Naive thymus-derived CD4-positive, alpha-beta T cell (primary cell): ENCODE measurements at regions of chr2 and their contacts with region 1.

Region 1: GRCh38 chr2:105576440-105577252 is 168.1 kb upstream of the NCK2 start:
- DNase-seq: peak in 7 of 9 donors; percentile 24 to 70 (median 50)
- ATAC-seq: peak; percentile 73
- H3K4me3 ChIP-seq: no peak overlapping the region
- H3K4me3 Mint-ChIP-seq: peak overlapping the region in 5 of 10 donors; percentile 1 to 41 (median 26)
- H3K27ac ChIP-seq: peak overlapping the region; percentile 39
- H3K27ac Mint-ChIP-seq: peak overlapping the region; percentile 74 to 95 (median 89)
- H3K4me1 ChIP-seq: peaks cover 3 to 16% of the 10 kb centered on the region in 2 donors
- H3K4me1 Mint-ChIP-seq: peaks cover 13 to 30% (median 20%) of the 10 kb centered on the region in 7 donors
- H3K27me3 ChIP-seq: no peaks in the 10 kb centered on the region
- H3K27me3 Mint-ChIP-seq: peaks cover 0 to 7% (median 0%) of the 10 kb centered on the region in 5 donors

Region 2: GRCh38 chr2:105744091-105744908 is 167.7 kb after region 1 on chr2:
- CTCF ChIA-PET with region 1: interaction called, 7 read pairs
- POLR2A ChIA-PET with region 1: interaction called, 5 read pairs
- intact Hi-C with region 1: loop called (anchors 2 kb)
- DNase-seq: peak; percentile 57 to 79 (median 69)
- ATAC-seq: peak; percentile 87
- H3K4me3 ChIP-seq: peak overlapping the region; percentile 24
- H3K4me3 Mint-ChIP-seq: peak overlapping the region; percentile 76 to 96 (median 90)
- H3K27ac ChIP-seq: peak overlapping the region; percentile 80
- H3K27ac Mint-ChIP-seq: peak overlapping the region; percentile 90 to 96 (median 95)
- H3K4me1 ChIP-seq: peaks cover 48 to 54% of the 10 kb centered on the region in 2 donors
- H3K4me1 Mint-ChIP-seq: peaks cover 49 to 82% (median 77%) of the 10 kb centered on the region in 7 donors
- H3K27me3 ChIP-seq: no peaks in the 10 kb centered on the region
- H3K27me3 Mint-ChIP-seq: no peaks in the 10 kb centered on the region

Region 3: DNA sequence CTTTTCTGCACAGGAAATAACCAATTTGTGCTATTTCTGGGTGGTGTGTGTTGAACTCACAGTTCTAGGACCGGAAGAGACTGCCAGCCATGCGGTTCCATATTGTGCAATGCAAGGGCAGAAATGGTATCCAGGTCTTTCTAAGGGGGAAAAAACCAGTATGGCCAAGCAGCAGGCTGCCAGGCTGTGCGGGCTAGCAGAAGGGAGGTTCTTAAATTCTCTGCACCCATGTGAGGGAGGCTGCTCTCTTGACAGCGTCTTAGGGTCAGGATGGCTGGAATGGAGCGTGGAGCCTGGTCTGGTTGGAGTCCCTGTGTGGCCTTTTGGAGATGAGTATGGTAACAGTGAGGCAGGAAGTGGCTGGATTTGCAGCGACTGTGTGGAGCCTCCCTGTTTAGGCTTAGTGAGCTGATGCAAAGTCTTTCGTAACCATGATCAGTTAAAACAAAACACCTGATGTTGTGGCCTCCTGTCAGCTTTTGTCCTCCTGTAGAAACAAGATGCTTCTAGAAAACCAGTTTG is 220.7 kb after region 1 on chr2:
- CTCF ChIA-PET with region 1: interaction called, 10 read pairs
- POLR2A ChIA-PET with region 1: interaction called, 5 read pairs
- intact Hi-C with region 1: loop called in 1 of 2 experiments (anchors 5 kb)
- DNase-seq: peak in 6 of 9 donors; percentile 37 to 58 (median 48)
- ATAC-seq: peak; percentile 33
- H3K4me3 ChIP-seq: peak overlapping the region; percentile 34
- H3K4me3 Mint-ChIP-seq: peak overlapping the region; percentile 70 to 92 (median 78)
- H3K27ac ChIP-seq: peak overlapping the region; percentile 74
- H3K27ac Mint-ChIP-seq: peak overlapping the region; percentile 92 to 100 (median 99)
- H3K4me1 ChIP-seq: peaks cover 92 to 93% of the 10 kb centered on the region in 2 donors
- H3K4me1 Mint-ChIP-seq: peaks cover 74 to 100% (median 94%) of the 10 kb centered on the region in 7 donors
- H3K27me3 ChIP-seq: no peaks in the 10 kb centered on the region
- H3K27me3 Mint-ChIP-seq: no peaks in the 10 kb centered on the region

Region 4: DNA sequence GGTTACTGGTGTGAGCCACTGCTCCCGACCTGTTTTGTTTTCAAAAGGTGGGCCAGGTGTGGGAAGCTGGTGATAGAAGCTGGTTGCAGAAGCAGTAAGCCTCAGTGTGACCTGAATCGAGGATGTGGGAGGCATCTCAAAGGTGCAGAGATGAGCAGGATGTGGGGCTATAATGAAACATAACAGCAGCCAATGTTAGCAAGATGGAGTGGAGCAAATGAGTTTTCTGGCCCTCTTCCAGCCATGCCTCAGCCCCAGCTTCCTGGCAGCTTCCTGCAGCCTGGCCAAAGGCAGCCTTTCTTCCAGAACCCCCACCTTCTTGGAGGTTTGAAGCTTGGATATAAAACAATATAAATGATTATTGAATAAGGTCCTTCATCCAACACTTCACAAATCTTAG is 352.9 kb after region 1 on chr2:
- CTCF ChIA-PET with region 1: interaction called, 3 read pairs
- POLR2A ChIA-PET with region 1: interaction called, 3 read pairs
- intact Hi-C with region 1: loop called in 1 of 2 experiments (anchors 5 kb)
- DNase-seq: peak in 8 of 9 donors; percentile 31 to 79 (median 70)
- ATAC-seq: peak; percentile 72
- H3K4me3 ChIP-seq: no peak overlapping the region
- H3K4me3 Mint-ChIP-seq: peak overlapping the region in 9 of 10 donors; percentile 51 to 85 (median 64)
- H3K27ac ChIP-seq: peak overlapping the region; percentile 55
- H3K27ac Mint-ChIP-seq: peak overlapping the region; percentile 63 to 97 (median 90)
- H3K4me1 ChIP-seq: peaks cover 61 to 83% of the 10 kb centered on the region in 2 donors
- H3K4me1 Mint-ChIP-seq: peaks cover 48 to 76% (median 71%) of the 10 kb centered on the region in 7 donors
- H3K27me3 ChIP-seq: no peaks in the 10 kb centered on the region
- H3K27me3 Mint-ChIP-seq: no peaks in the 10 kb centered on the region

Region 5: GRCh38 chr2:105977212-105977611 is 400.6 kb after region 1 on chr2:
- CTCF ChIA-PET with region 1: no interaction called
- POLR2A ChIA-PET with region 1: no interaction called
- intact Hi-C with region 1: loop called in 1 of 2 experiments (anchors 5 kb)
- DNase-seq: no peak
- ATAC-seq: no peak
- H3K4me3 ChIP-seq: no peak overlapping the region
- H3K4me3 Mint-ChIP-seq: peak overlapping the region in 6 of 10 donors; percentile 4 to 52 (median 16)
- H3K27ac ChIP-seq: no peak overlapping the region
- H3K27ac Mint-ChIP-seq: peak overlapping the region in 8 of 9 donors; percentile 66 to 89 (median 83)
- H3K4me1 ChIP-seq: peaks cover 0 to 41% of the 10 kb centered on the region in 2 donors
- H3K4me1 Mint-ChIP-seq: peaks cover 7 to 75% (median 59%) of the 10 kb centered on the region in 7 donors
- H3K27me3 ChIP-seq: no peaks in the 10 kb centered on the region
- H3K27me3 Mint-ChIP-seq: peaks cover 0 to 2% (median 0%) of the 10 kb centered on the region in 5 donors

Region 6: DNA sequence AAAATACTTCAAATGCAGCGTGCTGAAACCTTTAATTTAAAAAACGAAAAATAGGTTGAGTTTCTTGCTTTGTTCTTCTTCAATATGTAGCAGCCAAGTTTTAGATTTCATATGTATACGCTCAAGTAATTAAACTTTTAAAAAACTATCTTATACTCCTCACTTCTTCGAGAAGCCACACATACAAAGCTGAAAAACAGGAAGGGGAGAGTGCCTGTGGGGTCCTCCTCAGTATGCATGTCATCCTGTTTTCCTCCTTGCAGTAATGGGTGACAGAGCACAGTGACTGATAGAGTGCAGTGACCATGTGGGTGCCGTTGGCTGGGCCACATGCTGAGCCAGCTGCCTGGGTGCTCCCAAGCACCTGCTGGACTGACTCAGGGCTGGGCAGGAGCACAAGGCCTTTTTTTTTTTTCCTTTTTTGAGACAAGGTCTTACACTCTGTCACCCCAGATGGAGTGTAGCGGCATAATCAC is 584.2 kb after region 1 on chr2:
- CTCF ChIA-PET with region 1: interaction called, 6 read pairs
- POLR2A ChIA-PET with region 1: interaction called, 3 read pairs
- intact Hi-C with region 1: loop called in 1 of 2 experiments (anchors 5 kb)
- DNase-seq: peak in 8 of 9 donors; percentile 33 to 70 (median 62)
- ATAC-seq: peak; percentile 75
- H3K4me3 ChIP-seq: peak overlapping the region; percentile 77
- H3K4me3 Mint-ChIP-seq: peak overlapping the region; percentile 87 to 98 (median 95)
- H3K27ac ChIP-seq: peak overlapping the region; percentile 81
- H3K27ac Mint-ChIP-seq: peak overlapping the region; percentile 95 to 99 (median 98)
- H3K4me1 ChIP-seq: peaks cover 43 to 78% of the 10 kb centered on the region in 2 donors
- H3K4me1 Mint-ChIP-seq: peaks cover 47 to 100% (median 97%) of the 10 kb centered on the region in 7 donors
- H3K27me3 ChIP-seq: no peaks in the 10 kb centered on the region
- H3K27me3 Mint-ChIP-seq: no peaks in the 10 kb centered on the region